Dorsolateral prefrontal cortex (tissue), 120 donors: ENCODE measurements at regions of chr17 and their contacts with region 1.

Region 1: GRCh38 chr17:1260086-1260769 is 10.0 kb upstream of the BHLHA9 start:
- DNase-seq: peak in 1 of 10 donors; percentile 2
- H3K4me3 ChIP-seq: peak overlapping the region in 58 of 59 donors; percentile 17 to 65 (median 49)
- H3K27ac ChIP-seq: no peak overlapping the region
- H3K27me3 ChIP-seq: peaks cover 0 to 17% (median 0%) of the 10 kb centered on the region in 45 donors
- CTCF ChIP-seq: no peak

Region 2: GRCh38 chr17:1340371-1340770 is 80.1 kb after region 1 on chr17:
- intact Hi-C with region 1: loop called in 1 of 2 experiments (anchors 5 kb)
- DNase-seq: peak in 1 of 10 donors; percentile 15
- H3K4me3 ChIP-seq: no peak overlapping the region
- H3K27ac ChIP-seq: no peak overlapping the region
- H3K27me3 ChIP-seq: no peaks in the 10 kb centered on the region
- CTCF ChIP-seq: no peak

Region 3: GRCh38 chr17:1648963-1649843 is 389.0 kb after region 1 on chr17:
- intact Hi-C with region 1: loop called in 1 of 2 experiments (anchors 5 kb)
- DNase-seq: peak; percentile 90 to 95 (median 92)
- H3K4me3 ChIP-seq: peak overlapping the region; percentile 58 to 92 (median 75)
- H3K27ac ChIP-seq: peak overlapping the region; percentile 59 to 99 (median 94)
- H3K27me3 ChIP-seq: no peaks in the 10 kb centered on the region
- CTCF ChIP-seq: peak in 52 of 56 donors; percentile 63 to 97 (median 81)